Adrenal gland (tissue), 19 donors: ENCODE measurements at regions of chr2 and their contacts with region 1.

Region 1: DNA sequence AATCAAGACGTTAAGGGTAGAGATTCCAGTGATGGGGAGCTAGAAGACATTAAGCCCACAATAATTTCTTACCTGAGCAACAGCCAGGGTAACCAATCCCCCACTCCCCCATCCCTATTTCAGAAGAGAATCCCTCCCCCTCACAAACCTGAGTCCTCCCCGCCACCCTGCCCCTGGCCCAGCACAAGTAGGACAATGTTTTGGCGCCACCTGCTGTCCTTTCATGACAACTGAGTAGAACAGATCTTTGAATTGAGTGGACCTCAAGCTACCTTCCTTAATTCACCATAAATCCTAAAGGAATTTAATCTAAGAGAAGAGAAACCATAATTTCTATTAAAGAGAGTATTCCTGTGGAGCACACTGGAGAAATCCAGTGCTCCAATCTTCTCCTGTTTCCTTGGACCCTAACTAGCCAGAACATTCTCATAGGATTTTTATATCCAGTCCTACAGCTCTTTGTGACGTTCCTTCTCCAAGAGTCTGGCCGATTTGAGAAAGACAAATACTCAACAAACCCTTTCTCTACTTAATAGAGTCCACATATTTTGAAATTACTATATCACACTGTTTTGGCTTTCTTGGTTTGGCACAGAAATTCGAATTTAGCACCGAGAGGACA is 41.1 kb downstream of the NHEJ1 start:
- DNase-seq: peak; percentile 42 to 83 (median 71)
- H3K4me3 ChIP-seq: no peak overlapping the region
- H3K27ac ChIP-seq: no peak overlapping the region
- H3K4me1 ChIP-seq: peaks cover 3 to 4% of the 10 kb centered on the region in 2 donors
- H3K27me3 ChIP-seq: no peaks in the 10 kb centered on the region
- CTCF ChIP-seq: peak; percentile 44 to 82 (median 71)
- POLR2A ChIP-seq: no peak

Region 2: GRCh38 chr2:218418321-218418716 is 701.2 kb before region 1 on chr2:
- intact Hi-C with region 1: no loop called
- DNase-seq: no peak
- H3K4me3 ChIP-seq: no peak overlapping the region
- H3K27ac ChIP-seq: no peak overlapping the region
- H3K4me1 ChIP-seq: no peaks in the 10 kb centered on the region
- H3K27me3 ChIP-seq: no peaks in the 10 kb centered on the region
- CTCF ChIP-seq: no peak
- POLR2A ChIP-seq: no peak

Region 3: GRCh38 chr2:219057709-219058540 is 61.6 kb before region 1 on chr2:
- intact Hi-C with region 1: loop called (anchors 2 to 10 kb)
- DNase-seq: peak; percentile 68 to 85 (median 81)
- H3K4me3 ChIP-seq: peak overlapping the region in 1 of 4 donors; percentile 12
- H3K27ac ChIP-seq: no peak overlapping the region
- H3K4me1 ChIP-seq: peaks cover 20 to 36% of the 10 kb centered on the region in 2 donors
- H3K27me3 ChIP-seq: peaks cover 62% of the 10 kb centered on the region
- CTCF ChIP-seq: peak; percentile 85 to 97 (median 90)
- POLR2A ChIP-seq: no peak

Region 4: DNA sequence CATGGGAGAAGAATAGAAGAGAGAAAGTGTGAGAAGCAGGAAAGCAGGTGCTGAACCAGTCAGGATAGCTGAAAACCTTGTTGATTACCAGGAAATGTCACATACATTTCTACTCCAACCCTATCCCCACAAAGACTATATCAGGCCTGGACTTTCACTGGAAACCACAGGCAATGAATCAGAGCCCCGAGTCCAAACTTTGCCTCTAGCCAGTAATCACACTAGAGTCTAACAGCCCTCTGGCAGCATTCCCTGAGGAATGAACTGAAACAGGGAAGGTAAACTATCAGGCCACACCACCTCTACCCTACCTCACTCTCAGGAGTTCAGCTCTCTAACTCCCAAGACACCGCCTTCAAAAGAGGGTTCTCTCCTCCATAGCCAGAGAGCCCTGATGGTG is 40.1 kb before region 1 on chr2:
- intact Hi-C with region 1: loop called in 1 of 2 experiments (anchors 5 kb)
- DNase-seq: no peak
- H3K4me3 ChIP-seq: no peak overlapping the region
- H3K27ac ChIP-seq: no peak overlapping the region
- H3K4me1 ChIP-seq: no peaks in the 10 kb centered on the region
- H3K27me3 ChIP-seq: no peaks in the 10 kb centered on the region
- CTCF ChIP-seq: no peak
- POLR2A ChIP-seq: no peak